RWPE1 (cell line): ENCODE measurements at regions of chr15 and their contacts with region 1.

Region 1: DNA sequence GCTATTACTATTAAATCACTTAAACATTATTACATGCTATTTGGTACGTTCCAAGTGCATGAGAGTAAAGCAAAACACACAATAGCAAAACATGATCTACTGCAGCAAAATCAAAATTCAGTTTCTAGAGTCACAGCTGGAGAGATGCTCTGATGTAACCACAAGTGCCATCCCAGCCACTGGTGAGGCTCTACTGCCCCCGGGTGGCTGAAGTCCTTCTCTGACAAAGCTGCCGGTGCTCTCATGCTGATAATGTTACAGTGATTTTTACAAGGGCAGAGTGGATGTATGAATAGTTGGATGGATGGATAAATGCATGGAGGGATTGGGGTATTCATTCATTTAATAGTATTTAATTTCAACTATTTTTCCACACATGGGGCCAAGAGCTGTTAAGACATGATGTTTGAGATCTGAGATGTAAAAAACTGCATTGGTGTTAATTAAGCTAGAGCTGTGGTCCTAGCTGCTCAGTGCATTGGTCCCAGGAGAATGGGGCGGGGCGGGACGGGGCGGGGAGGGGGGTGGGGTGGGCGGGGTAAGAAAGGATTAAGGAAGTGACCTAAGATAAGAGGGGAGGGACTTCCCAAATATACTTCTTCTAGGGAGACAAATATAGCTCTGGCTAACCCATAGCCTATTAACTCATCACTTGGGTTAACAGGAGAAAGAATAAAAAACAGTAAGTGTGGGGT is 5.3 kb upstream of the SPESP1 start:
- DNase-seq: peak; percentile 87
- H3K27ac ChIP-seq: no peak overlapping the region
- CTCF ChIP-seq: peak; percentile 95

Region 2: GRCh38 chr15:68559345-68560310 is 365.4 kb before region 1 on chr15:
- CTCF ChIA-PET with region 1: interaction called, 13 read pairs
- POLR2A ChIA-PET with region 1: no interaction called
- DNase-seq: peak; percentile 78
- H3K27ac ChIP-seq: no peak overlapping the region
- CTCF ChIP-seq: peak; percentile 99

Region 3: DNA sequence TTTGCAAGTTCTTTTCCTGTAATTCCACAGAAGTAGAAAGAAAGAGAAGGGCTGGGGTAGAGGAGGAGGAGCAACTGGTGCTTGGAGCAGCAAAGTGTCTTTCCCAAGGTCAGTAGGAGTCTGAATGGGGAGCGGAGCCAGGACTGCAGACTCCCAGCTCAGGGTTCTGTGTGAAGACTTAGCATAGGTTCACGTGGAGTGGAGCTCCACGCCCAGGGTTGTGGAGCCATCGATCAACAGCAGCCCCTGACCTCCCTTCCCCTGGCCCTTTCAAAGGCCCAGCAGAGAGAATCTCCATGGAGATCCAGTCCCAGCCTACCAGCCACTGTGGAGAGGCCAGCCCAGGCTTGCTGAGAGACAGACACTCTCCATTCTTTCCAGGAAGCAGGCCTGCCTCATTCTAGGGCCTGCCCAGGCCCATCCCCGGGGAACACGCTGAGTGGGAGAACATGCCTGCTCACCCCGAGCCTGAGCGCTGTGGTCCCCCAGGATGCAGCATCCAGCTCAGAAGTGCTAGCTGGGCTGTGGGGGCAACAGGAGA is 284.2 kb before region 1 on chr15:
- CTCF ChIA-PET with region 1: interaction called, 10 read pairs
- POLR2A ChIA-PET with region 1: no interaction called
- DNase-seq: peak; percentile 94
- H3K27ac ChIP-seq: peak overlapping the region; percentile 88
- CTCF ChIP-seq: no peak

Region 4: DNA sequence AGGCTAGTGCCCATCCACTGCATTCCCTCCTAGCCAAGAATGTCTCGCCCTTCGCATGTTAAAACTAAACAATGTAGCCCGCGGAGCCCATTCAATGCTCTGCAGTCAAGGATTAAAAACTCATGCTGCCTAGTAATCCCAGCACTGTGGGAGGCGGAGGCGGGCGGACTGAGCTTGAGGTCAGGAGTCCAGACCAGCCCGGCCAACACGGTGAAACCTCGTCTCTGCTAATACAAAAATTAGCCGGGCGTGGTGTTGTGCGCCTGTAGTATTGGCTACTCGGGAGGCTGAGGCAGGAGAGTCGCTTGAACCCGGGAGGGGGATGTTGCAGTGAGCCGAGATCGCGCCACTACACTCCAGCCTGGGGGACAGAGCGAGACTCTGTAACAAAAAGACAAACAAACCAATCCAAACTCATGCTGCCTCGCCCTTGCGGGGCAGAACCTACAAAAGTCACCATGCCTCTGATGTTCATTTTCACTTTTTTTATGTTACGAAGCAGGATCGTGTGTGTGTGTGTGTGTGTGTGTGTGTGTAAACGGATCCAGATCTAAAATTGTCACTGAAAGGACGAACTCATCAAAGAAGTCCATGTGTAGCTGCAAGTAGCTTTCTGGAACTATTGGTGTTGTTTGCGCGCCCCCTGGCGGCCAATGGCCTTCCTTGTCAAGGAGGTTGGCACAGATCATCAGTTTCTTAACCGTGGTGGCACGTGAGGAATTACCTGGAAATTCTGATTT is 49.5 kb before region 1 on chr15:
- CTCF ChIA-PET with region 1: interaction called, 13 read pairs
- POLR2A ChIA-PET with region 1: no interaction called
- DNase-seq: peak; percentile 83
- H3K27ac ChIP-seq: no peak overlapping the region
- CTCF ChIP-seq: peak; percentile 92

Region 5: DNA sequence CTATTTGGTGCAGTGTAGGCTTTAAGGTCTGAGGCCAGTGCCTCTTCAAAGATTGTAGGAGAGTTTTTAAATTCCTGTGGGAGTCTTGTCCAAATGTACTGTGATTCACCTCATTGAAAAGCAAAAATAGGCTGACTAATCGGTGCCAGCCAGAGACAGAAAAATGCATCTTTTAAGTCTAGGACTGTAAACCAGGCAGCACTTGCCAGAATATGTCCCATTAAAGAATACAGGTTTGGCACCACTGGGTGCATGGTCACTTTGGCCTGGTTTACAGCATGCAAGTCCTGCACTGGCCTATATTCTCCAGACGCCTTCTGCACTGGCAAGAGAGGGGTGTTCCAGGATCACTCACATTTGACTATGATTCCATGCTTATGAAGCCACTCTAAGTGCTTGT is 69.1 kb after region 1 on chr15:
- CTCF ChIA-PET with region 1: no interaction called
- POLR2A ChIA-PET with region 1: no interaction called
- DNase-seq: peak; percentile 61
- H3K27ac ChIP-seq: no peak overlapping the region
- CTCF ChIP-seq: no peak